HepG2 (cell line): ENCODE measurements at regions of chr1 and their contacts with region 1.

Region 1: GRCh38 chr1:105100102-105100501 is 1350.4 kb downstream of the AMY1C start:
- DNase-seq: peak; percentile 75
- ATAC-seq: peak; percentile 81
- H3K4me3 ChIP-seq: no peak overlapping the region; a peak in 1 of 6 replicates
- H3K27ac ChIP-seq: no peak overlapping the region
- H3K4me1 ChIP-seq: peaks cover 34% of the 10 kb centered on the region
- H3K27me3 ChIP-seq: no peaks in the 10 kb centered on the region
- CTCF ChIP-seq: no peak
- EP300 ChIP-seq: peak in 1 of 2 experiments; percentile 71; a peak in 2 of 4 replicates
- POLR2A ChIP-seq: no peak
- RAD21 ChIP-seq: no peak

Region 2: DNA sequence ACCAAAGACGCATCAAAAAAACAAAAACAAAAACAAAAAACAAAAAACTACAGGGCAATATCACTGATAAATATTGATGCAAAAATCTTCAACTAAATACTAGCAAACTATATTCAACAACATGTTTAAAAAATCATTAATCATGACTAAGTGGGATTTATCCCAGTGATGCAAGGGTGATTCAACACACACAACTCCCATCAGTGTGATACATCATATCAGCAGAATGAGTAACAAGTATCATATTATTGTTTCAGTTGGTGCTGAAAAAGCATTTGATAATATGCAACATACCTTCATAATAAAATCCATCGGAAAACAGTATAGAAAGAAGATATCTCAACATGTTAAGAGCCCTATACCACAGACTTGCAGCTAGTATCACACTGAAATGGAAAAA is 397.4 kb before region 1 on chr1:
- CTCF ChIA-PET with region 1: no interaction called
- POLR2A ChIA-PET with region 1: no interaction called
- in situ Hi-C with region 1: no loop called
- intact Hi-C with region 1: no loop called
- DNase-seq: no peak
- ATAC-seq: no peak
- H3K4me3 ChIP-seq: no peak overlapping the region
- H3K27ac ChIP-seq: no peak overlapping the region
- H3K4me1 ChIP-seq: no peaks in the 10 kb centered on the region
- H3K27me3 ChIP-seq: no peaks in the 10 kb centered on the region; a peak in 1 of 5 replicates
- CTCF ChIP-seq: no peak
- EP300 ChIP-seq: no peak
- POLR2A ChIP-seq: no peak
- RAD21 ChIP-seq: no peak

Region 3: GRCh38 chr1:105072850-105073249 is 27.3 kb before region 1 on chr1:
- CTCF ChIA-PET with region 1: no interaction called
- POLR2A ChIA-PET with region 1: no interaction called
- in situ Hi-C with region 1: no loop called
- intact Hi-C with region 1: no loop called
- DNase-seq: no peak
- ATAC-seq: peak; percentile 33; the same call in 1 of the 3 replicates
- H3K4me3 ChIP-seq: no peak overlapping the region
- H3K27ac ChIP-seq: no peak overlapping the region
- H3K4me1 ChIP-seq: no peaks in the 10 kb centered on the region
- H3K27me3 ChIP-seq: no peaks in the 10 kb centered on the region
- CTCF ChIP-seq: 0 out of 2 replicates have a peak, but pooled peaks have one; percentile 8
- EP300 ChIP-seq: no peak
- POLR2A ChIP-seq: no peak
- RAD21 ChIP-seq: no peak

Region 4: GRCh38 chr1:105427543-105427942 is 327.4 kb after region 1 on chr1:
- CTCF ChIA-PET with region 1: no interaction called
- POLR2A ChIA-PET with region 1: no interaction called
- in situ Hi-C with region 1: no loop called
- intact Hi-C with region 1: no loop called
- DNase-seq: no peak
- ATAC-seq: no peak
- H3K4me3 ChIP-seq: no peak overlapping the region
- H3K27ac ChIP-seq: no peak overlapping the region
- H3K4me1 ChIP-seq: no peaks in the 10 kb centered on the region
- H3K27me3 ChIP-seq: no peaks in the 10 kb centered on the region
- CTCF ChIP-seq: no peak
- EP300 ChIP-seq: no peak
- POLR2A ChIP-seq: no peak
- RAD21 ChIP-seq: no peak

Region 5: GRCh38 chr1:105632342-105633196 is 532.5 kb after region 1 on chr1:
- CTCF ChIA-PET with region 1: no interaction called
- POLR2A ChIA-PET with region 1: no interaction called
- in situ Hi-C with region 1: no loop called
- intact Hi-C with region 1: loop called (anchors 2 kb)
- DNase-seq: peak; percentile 96
- ATAC-seq: peak; percentile 97
- H3K4me3 ChIP-seq: peak overlapping the region; percentile 54 to 66 (median 63)
- H3K27ac ChIP-seq: peak overlapping the region; percentile 92
- H3K4me1 ChIP-seq: peaks cover 35% of the 10 kb centered on the region
- H3K27me3 ChIP-seq: no peaks in the 10 kb centered on the region
- CTCF ChIP-seq: no peak
- EP300 ChIP-seq: peak in 1 of 2 experiments; percentile 93; a peak in 3 of 4 replicates
- POLR2A ChIP-seq: peak; percentile 64 to 72; a peak in 3 of 4 replicates
- RAD21 ChIP-seq: no peak